ENCODE measurements at regions of chr7 and their contacts with region 1.

Region 1: DNA sequence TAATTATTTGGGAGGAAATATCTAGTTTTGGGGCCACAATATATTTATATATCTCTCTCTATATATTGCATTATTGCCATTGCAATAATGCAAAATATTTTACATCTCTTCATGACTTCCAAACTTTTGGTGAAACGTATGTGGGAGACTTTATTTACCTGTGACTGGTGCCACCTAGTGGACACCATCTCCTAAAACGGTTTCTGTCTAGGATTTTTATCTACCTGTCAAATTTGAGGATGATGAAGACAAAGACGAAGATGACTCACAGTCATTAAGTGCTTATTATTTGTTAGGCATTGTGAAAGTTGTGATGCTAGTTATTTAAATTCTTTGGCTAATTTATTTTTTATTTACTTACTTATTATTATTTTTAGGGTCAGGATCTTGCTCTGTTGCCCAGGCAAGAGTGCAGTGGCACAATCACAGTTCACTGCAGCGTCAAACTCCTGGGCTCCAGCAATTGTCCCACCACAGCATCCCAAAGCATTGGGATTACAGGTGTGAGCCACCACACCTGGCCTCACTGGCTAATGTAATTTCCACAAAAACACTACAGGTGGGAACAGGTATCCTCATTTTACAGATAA is 18.7 kb upstream of the CBLL1 start:
- DNase-seq: peak; percentile 60 to 61
- ATAC-seq: peak in 1 of 2 experiments; percentile 67; a peak in 2 of 6 replicates
- H3K4me3 ChIP-seq: no peak overlapping the region
- H3K27ac ChIP-seq: no peak overlapping the region
- H3K4me1 ChIP-seq: no peaks in the 10 kb centered on the region
- CTCF ChIP-seq: peak; percentile 91
- EP300 ChIP-seq: no peak
- POLR2A ChIP-seq: no peak
- RAD21 ChIP-seq: peak; percentile 73 to 78

Region 2: DNA sequence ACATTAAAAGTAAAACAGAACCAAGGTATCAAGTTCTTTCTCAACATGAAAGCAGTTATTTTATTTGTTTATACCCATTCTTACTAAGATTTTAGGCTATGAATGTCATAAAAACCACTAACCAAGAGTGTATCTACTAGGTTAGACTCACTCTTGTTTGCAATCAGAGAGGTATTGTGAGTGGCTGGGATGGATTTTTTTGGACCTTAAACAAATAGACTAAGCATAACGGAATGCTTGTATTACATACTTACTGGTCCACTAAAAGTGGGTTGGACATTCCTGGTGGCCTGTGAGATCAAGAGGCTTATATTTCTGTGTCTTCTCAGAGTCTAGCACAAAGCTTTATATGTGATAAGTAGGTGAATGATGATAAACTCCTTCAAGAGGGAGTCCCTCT is 13.9 kb before region 1 on chr7:
- CTCF ChIA-PET with region 1: interaction called, 10 read pairs
- POLR2A ChIA-PET with region 1: no interaction called
- DNase-seq: no peak
- ATAC-seq: no peak
- H3K4me3 ChIP-seq: no peak overlapping the region
- H3K27ac ChIP-seq: no peak overlapping the region
- H3K4me1 ChIP-seq: no peaks in the 10 kb centered on the region
- CTCF ChIP-seq: no peak
- EP300 ChIP-seq: no peak
- POLR2A ChIP-seq: no peak
- RAD21 ChIP-seq: no peak

Region 3: GRCh38 chr7:107799647-107800264 is 74.5 kb after region 1 on chr7:
- CTCF ChIA-PET with region 1: no interaction called
- POLR2A ChIA-PET with region 1: no interaction called
- DNase-seq: no peak
- ATAC-seq: no peak
- H3K4me3 ChIP-seq: no peak overlapping the region
- H3K27ac ChIP-seq: no peak overlapping the region
- H3K4me1 ChIP-seq: no peaks in the 10 kb centered on the region
- CTCF ChIP-seq: no peak
- EP300 ChIP-seq: no peak
- POLR2A ChIP-seq: no peak
- RAD21 ChIP-seq: no peak

Region 4: DNA sequence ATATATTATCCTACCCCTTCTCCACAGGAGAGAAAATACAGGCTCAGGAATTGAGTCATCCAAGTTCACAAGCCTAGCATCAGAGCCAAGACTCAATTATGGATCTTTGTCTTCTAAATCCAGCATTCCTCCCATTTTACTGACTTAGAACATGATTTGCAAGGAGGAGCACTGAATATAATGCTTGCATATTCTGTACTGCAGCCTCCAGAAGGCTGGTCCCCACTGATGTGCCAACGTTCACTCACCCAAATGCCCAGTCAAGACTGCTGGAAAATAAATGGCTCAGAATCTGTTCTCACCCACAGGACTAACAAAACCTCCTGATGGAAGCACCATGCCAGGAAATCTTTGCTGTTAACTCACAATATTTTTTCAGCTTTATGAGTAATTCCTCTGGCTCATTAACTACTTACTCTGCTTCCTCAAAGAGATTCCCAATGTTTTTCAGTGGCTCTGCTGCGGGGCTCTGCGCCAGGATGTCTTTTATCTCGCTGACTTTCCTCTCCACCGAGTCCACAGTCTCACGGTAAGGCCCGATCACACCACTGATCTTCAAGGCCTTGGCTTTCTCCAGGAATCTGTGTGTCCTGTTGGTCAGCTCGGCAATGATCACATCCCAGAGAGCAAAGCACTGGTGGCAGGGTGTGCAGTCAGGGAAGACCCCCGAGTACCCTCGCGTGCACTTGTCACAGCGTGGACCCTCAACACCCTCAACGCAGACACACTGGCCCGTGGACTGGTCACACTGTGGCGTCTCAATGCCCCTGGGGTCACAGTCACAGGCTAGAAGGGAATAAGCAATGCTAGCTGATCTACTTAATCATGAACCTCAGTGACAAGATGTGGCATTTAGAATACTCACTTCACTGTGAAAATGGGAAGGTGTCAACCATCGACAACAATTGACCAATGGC is 214.6 kb after region 1 on chr7:
- CTCF ChIA-PET with region 1: no interaction called
- POLR2A ChIA-PET with region 1: no interaction called
- DNase-seq: no peak
- ATAC-seq: no peak
- H3K4me3 ChIP-seq: no peak overlapping the region
- H3K27ac ChIP-seq: no peak overlapping the region
- H3K4me1 ChIP-seq: peaks cover 13% of the 10 kb centered on the region; the same call in 2 of the 3 replicates
- CTCF ChIP-seq: no peak
- EP300 ChIP-seq: no peak
- POLR2A ChIP-seq: no peak
- RAD21 ChIP-seq: no peak

Measured in A549 (cell line).